ENCODE measurements at regions of chr18 and their contacts with region 1.

Region 1: GRCh38 chr18:25081001-25081400 is 271.0 kb downstream of the ZNF521 start:
- DNase-seq: no peak
- H3K4me3 ChIP-seq: no peak overlapping the region
- H3K27ac ChIP-seq: no peak overlapping the region
- H3K4me1 ChIP-seq: no peaks in the 10 kb centered on the region
- H3K27me3 ChIP-seq: no peaks in the 10 kb centered on the region
- CTCF ChIP-seq: no peak

Region 2: GRCh38 chr18:24885276-24885675 is 195.7 kb before region 1 on chr18:
- CTCF ChIA-PET with region 1: no interaction called
- POLR2A ChIA-PET with region 1: no interaction called
- intact Hi-C with region 1: loop called (anchors 10 kb)
- DNase-seq: no peak
- H3K4me3 ChIP-seq: no peak overlapping the region
- H3K27ac ChIP-seq: no peak overlapping the region
- H3K4me1 ChIP-seq: no peaks in the 10 kb centered on the region
- H3K27me3 ChIP-seq: no peaks in the 10 kb centered on the region
- CTCF ChIP-seq: no peak

Region 3: DNA sequence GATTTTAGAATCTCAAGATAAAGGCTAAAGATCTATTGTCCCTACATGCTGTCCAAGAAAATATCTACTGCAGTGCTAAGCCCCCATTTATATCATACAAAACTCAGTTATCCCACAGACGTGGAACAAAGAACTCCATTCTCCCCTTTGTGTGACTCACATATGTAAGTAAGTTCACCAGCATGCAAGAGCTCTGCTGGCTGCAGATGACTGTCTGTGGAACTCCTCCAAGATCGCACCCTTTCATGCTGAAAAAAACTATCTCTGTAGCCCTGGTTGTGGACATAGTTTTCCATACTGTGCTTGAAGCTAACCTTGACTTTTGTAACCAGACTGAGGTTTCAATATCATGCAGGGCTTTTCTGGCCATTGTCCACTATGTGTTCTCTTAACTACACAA is 63.8 kb after region 1 on chr18:
- CTCF ChIA-PET with region 1: no interaction called
- POLR2A ChIA-PET with region 1: no interaction called
- intact Hi-C with region 1: loop called (anchors 10 kb)
- DNase-seq: no peak
- H3K4me3 ChIP-seq: no peak overlapping the region
- H3K27ac ChIP-seq: no peak overlapping the region
- H3K4me1 ChIP-seq: no peaks in the 10 kb centered on the region
- H3K27me3 ChIP-seq: peaks cover 5% of the 10 kb centered on the region
- CTCF ChIP-seq: no peak